Left cardiac atrium (tissue), 4 donors: ENCODE measurements at regions of chr16 and their contacts with region 1.

Region 1: DNA sequence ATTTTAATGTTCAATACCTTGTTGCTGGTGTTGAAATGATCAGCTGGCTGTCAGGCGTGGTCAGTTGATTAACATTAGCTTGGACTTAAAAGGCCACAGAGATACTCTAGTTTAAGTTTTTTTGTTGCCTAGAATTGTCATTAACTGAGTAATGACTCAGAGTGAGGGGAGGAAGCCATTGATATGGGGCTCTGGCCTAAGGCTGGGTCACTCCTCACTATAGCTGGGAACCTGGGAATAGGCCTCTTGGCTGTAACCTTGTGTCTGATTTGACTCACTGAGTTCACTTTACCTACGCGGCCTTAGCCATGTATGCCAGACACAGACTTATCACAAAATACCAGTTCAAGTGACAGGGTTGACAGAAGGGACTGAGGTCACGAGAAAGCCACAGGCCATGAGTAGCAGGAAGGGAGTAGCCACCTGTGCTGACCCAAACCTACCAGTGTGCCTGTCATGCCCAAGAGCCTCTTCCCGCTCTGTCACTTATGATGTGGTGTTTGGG is 37.9 kb upstream of the ADCY7 start:
- DNase-seq: no peak
- ATAC-seq: no peak

Region 2: DNA sequence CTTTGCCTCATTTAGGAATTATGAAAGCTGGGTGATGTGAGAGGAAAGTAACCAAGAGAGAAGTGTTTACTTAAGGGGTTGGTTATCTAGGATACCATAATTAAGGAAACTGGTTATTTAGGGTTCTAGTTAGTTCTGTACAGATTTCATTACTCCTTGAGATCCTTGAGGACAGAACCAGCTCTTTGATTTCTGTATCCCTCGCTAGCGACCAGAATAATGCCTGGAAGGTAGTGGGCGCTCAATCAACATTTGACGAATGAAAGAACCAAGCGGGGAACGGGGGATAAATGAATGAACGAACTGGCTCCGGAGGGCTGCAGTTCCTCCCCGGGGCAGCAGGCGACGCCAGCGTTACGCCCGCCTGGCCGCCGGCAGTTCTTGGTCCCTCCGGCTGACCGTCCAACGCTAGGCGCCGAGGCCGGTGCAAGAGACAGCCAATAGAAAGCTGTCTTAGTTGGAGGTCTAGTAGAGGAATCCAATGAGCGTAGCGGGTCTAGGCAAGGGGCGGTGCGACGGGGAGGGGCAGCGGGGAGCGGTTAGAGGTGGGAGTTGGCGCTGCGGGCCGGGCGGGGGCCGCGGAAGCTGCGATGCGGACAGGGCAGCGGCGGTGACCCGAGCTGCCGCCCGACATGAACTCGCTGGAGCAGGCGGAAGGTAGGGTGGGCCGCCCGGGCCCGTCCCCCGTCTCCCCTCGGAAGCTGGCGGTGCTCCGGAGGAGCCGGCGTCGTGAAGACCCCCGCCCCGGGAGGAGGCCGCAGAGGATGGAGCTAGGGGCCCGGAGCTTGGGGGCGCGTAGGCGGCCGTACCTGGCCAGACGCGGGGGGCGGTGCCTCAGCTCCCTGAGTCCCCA is 203.5 kb before region 1 on chr16 and contains the start of gene CNEP1R1:
- intact Hi-C with region 1: no loop called
- DNase-seq: peak; percentile 94
- ATAC-seq: peak; percentile 100
- total RNA-seq, gene CNEP1R1: 16.2 to 17.1 TPM

Region 3: GRCh38 chr16:50354629-50355456 is 126.4 kb after region 1 on chr16:
- intact Hi-C with region 1: loop called in 1 of 2 experiments (anchors 10 kb)
- DNase-seq: no peak
- ATAC-seq: no peak